ENCODE measurements at regions of chr12 and their contacts with region 1.

Region 1: GRCh38 chr12:117119592-117120198 is 20.5 kb upstream of the TESC start:
- DNase-seq: peak; percentile 70

Region 2: GRCh38 chr12:117011988-117012805 is 107.5 kb before region 1 on chr12:
- in situ Hi-C with region 1: loop called (anchors 25 kb)
- DNase-seq: no peak

Region 3: GRCh38 chr12:117084405-117085317 is 35.0 kb before region 1 on chr12:
- in situ Hi-C with region 1: no loop called
- DNase-seq: no peak

Measured in SK-MEL-5 (cell line).